Tibial artery (tissue), 4 donors: ENCODE measurements at regions of chr22 and their contacts with region 1.

Region 1: DNA sequence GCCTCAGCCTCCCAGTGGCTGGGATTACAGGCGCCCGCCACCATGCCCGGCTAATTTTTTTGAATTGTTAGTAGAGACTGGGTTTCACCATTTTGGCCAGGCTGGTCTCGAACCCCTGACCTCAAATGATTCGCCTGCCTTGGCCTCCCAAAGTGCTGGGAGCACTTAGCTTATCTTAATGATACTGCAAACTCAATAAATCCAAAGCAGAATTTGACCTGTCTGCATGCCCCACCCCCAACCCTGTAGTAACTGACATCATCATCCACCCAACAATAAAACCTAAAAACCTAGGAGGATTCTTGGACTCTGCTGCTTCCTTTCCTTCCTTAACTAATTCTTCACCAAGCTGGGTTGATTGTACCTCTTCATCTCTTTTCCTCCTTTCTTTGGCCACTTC is 6.3 kb upstream of the ADSL start:
- DNase-seq: no peak
- H3K4me3 ChIP-seq: no peak overlapping the region
- H3K27ac ChIP-seq: no peak overlapping the region
- H3K4me1 ChIP-seq: no peaks in the 10 kb centered on the region
- H3K27me3 ChIP-seq: no peaks in the 10 kb centered on the region
- CTCF ChIP-seq: no peak

Region 2: DNA sequence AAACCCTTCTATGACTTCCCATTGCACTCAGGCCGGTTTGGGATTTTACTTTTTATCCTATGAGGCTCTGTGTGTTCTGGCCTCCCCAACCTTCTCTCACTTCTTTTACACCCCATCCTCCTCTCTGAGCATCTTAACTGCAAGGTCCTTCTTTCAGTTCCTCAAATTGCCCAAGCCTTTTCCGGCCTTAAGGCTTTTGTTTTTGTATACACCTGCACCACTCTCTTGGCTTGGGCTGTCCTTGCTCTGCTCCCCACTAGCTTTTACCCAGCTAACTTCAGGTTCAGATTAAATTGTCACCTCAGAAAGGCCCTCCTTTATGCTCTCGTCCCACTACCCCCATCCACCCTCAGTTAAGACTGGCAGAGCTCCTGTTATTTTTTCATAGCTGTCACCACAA is 289.8 kb before region 1 on chr22:
- intact Hi-C with region 1: loop called (anchors 5 kb)
- DNase-seq: no peak
- H3K4me3 ChIP-seq: no peak overlapping the region
- H3K27ac ChIP-seq: no peak overlapping the region
- H3K4me1 ChIP-seq: peaks cover 0 to 22% (median 14%) of the 10 kb centered on the region in 4 donors
- H3K27me3 ChIP-seq: no peaks in the 10 kb centered on the region
- CTCF ChIP-seq: no peak

Region 3: DNA sequence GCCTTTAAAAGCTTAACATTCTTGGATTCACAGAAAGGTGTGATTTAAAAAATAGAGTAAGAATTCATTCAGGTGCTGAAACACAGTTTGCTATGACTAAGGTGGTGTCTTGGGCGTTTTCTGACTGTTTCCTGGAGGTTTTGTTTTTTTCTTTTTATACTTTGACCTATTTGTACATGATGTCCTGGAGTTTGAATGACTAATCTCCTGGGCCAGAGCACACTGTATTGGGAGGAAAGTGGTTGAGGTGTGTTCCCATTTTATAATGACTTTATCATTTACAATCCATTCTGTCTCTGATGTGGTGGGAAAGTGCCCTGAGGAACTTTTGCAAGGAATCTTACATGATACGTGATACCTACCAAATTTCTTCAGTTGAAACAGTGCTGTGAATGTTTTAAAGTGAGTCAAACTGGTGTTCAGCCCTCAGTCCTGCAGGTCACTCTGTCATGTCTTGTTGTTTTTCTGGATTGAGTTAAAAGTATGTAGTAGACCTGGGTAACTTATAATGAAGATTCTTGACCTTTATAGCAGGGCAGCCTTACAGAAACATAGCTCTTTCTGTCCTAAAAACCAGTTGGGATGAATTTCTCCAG is 81.5 kb before region 1 on chr22:
- intact Hi-C with region 1: no loop called
- DNase-seq: no peak
- H3K4me3 ChIP-seq: no peak overlapping the region
- H3K27ac ChIP-seq: no peak overlapping the region
- H3K4me1 ChIP-seq: peaks cover 0 to 17% (median 5%) of the 10 kb centered on the region in 4 donors
- H3K27me3 ChIP-seq: no peaks in the 10 kb centered on the region
- CTCF ChIP-seq: no peak

Region 4: DNA sequence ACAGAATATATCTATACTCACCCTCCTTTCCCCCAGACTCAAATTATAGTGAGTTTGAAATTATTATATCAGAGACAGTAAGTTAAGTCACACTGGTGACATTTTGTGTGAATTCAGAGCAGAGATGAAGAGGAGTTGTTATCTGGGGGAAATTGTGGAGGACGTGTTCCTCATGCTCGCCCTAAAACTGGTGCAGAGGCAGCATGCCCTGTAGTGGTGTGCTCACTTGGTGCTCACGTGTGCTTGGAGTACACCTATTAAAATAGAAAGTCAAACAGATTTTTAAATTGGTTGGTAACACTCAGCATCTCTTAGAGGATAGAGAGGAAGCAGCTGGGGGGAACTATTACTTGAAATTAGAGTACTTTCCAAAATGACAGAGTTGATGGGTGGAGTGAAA is 45.3 kb before region 1 on chr22:
- intact Hi-C with region 1: no loop called
- DNase-seq: no peak
- H3K4me3 ChIP-seq: no peak overlapping the region
- H3K27ac ChIP-seq: no peak overlapping the region
- H3K4me1 ChIP-seq: peaks cover 0 to 3% (median 2%) of the 10 kb centered on the region in 4 donors
- H3K27me3 ChIP-seq: no peaks in the 10 kb centered on the region
- CTCF ChIP-seq: no peak